Ascending aorta (tissue), 2 donors: ENCODE measurements at regions of chr5 and their contacts with region 1.

Region 1: GRCh38 chr5:138542956-138543729 is at the start of gene ETF1:
- DNase-seq: peak; percentile 100
- H3K4me3 ChIP-seq: peak within 1 kb of the TSS; percentile 95 to 99
- H3K27ac ChIP-seq: peak within 1 kb of the TSS; percentile 99
- H3K4me1 ChIP-seq: peaks cover 16 to 38% of the 10 kb centered on the region in 2 donors
- H3K27me3 ChIP-seq: no peaks in the 10 kb centered on the region
- CTCF ChIP-seq: no peak
- total RNA-seq, gene ETF1: 28.2 TPM

Region 2: GRCh38 chr5:138337685-138338410 is 205.3 kb before region 1 on chr5 and contains the start of gene FAM53C:
- intact Hi-C with region 1: loop called (anchors 1 kb)
- DNase-seq: peak; percentile 69 to 94
- H3K4me3 ChIP-seq: peak within 1 kb of the TSS; percentile 87 to 93
- H3K27ac ChIP-seq: peak within 1 kb of the TSS; percentile 94 to 95
- H3K4me1 ChIP-seq: peaks cover 0 to 8% of the 10 kb centered on the region in 2 donors
- H3K27me3 ChIP-seq: no peaks in the 10 kb centered on the region
- CTCF ChIP-seq: no peak
- total RNA-seq, gene FAM53C: 40.0 TPM

Region 3: DNA sequence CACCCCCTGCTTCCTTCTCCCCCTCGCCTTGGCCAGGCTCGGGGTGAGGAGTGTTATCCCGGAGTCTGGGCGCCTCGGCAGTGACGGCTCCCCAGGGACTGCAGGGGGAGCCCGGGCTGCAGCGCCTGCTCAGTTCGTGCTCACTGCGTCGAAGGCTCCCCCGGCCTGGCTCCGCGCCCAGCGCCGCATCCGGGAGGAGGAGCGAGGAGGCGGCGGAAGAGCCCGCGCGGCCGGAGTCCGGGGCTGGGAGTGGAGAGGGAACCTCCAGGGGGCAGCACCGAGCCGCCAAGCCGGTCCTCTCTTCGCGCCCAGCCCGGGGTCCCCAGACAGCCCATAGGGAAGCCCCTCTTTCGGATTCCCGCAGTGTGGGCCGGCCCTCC is 79.1 kb before region 1 on chr5:
- intact Hi-C with region 1: loop called (anchors 1 kb)
- DNase-seq: peak; percentile 71 to 96
- H3K4me3 ChIP-seq: peak overlapping the region; percentile 65 to 91
- H3K27ac ChIP-seq: peak overlapping the region; percentile 98 to 99
- H3K4me1 ChIP-seq: peaks cover 9 to 27% of the 10 kb centered on the region in 2 donors
- H3K27me3 ChIP-seq: no peaks in the 10 kb centered on the region
- CTCF ChIP-seq: peak; percentile 90 to 96 (median 95)

Region 4: DNA sequence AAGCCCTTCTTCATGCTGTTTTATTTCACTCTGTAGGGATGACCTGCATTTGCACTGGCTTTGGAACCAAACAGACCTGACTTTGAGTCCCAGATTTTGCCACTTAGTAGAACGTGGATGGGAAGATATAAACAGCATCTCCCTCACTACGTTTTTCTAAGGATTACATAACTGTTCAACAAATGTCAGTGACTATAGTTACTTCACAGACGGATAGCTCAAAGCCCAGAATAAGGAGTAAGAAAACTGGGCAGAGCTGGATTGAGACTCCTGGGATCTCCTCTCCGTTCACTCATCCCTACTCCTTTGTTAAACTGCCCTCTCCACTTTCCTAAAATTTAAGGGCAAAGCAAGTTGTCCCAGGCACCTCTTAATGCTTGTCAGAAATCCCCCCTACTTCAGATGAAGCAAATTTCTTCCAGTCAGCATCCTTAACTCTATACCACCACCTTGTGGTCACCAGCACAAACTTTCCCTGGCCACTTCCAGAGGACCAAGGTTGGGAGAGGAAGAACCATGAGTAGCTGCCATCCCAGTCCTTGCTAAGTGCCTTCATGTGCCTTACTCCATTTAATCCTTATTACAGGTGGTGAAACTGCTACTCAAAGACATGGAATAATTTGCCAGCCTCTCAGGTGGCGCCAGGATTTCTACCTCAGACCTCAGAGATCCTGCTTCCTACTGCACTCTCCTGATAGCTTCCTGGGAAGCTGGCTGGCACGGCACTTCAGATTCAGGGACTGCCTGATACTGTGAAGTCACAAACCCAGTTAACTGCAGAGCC is 39.5 kb before region 1 on chr5:
- intact Hi-C with region 1: loop called (anchors 2 kb)
- DNase-seq: no peak
- H3K4me3 ChIP-seq: no peak overlapping the region
- H3K27ac ChIP-seq: peak overlapping the region; percentile 35 to 43
- H3K4me1 ChIP-seq: peaks cover 5 to 19% of the 10 kb centered on the region in 2 donors
- H3K27me3 ChIP-seq: no peaks in the 10 kb centered on the region
- CTCF ChIP-seq: peak; percentile 74 to 80 (median 78)

Region 5: GRCh38 chr5:139197710-139198669 is 654.8 kb after region 1 on chr5 and contains the start of gene SIL1:
- intact Hi-C with region 1: loop called (anchors 2 kb)
- DNase-seq: peak; percentile 84 to 98
- H3K4me3 ChIP-seq: peak within 1 kb of the TSS; percentile 63 to 79
- H3K27ac ChIP-seq: peak within 1 kb of the TSS; percentile 77 to 89
- H3K4me1 ChIP-seq: peaks cover 0 to 9% of the 10 kb centered on the region in 2 donors
- H3K27me3 ChIP-seq: no peaks in the 10 kb centered on the region
- CTCF ChIP-seq: no peak
- total RNA-seq, gene SIL1: 53.4 TPM